ENCODE measurements at regions of chr13 and their contacts with region 1.

Region 1: DNA sequence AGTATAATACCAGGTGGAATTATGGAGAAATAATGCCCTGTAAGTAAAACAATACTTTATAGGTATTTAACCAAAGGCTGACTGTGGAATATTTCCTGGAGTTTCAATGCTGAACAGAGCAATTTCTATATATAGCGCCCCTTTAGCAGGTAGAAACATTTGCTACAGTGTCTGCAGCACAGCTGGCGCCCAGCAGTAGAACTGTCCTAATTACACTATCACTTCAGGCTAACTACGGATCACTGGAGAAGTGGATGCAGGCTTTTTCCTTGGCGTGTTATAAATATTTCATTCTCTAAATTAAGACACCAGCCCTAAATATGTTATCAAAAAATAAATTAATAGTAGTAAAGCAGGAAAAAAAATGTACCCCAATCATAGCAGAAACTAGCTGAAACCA is 3.1 kb downstream of the SHISA2 start:
- DNase-seq: no peak
- ATAC-seq: no peak
- H3K4me3 ChIP-seq: no peak overlapping the region
- H3K27ac ChIP-seq: no peak overlapping the region
- H3K4me1 ChIP-seq: peaks cover 0 to 31% (median 13%) of the 10 kb centered on the region in 9 donors
- H3K27me3 ChIP-seq: peaks cover 0 to 99% (median 86%) of the 10 kb centered on the region in 7 donors
- CTCF ChIP-seq: no peak

Region 2: DNA sequence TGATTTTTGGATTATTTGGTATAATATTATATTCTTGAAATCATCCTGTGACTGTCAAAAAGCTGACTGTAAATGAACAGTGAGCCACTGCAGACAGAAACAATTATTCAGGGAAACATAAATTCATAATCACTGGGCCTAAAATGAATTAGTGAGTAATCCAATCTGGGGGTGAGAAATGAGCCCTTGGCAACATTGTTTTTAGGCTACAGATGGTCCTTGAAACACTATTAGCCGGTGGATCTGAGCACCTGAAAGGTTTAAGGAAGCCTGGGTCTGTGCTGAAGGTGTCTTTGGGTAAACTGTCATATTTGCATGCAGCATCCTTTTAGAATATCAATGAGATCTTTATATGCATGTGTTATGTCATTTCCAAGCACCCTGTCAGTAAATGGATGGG is 386.2 kb before region 1 on chr13:
- intact Hi-C with region 1: loop called in 1 of 10 experiments (anchors 1 kb)
- DNase-seq: no peak
- ATAC-seq: no peak
- H3K4me3 ChIP-seq: no peak overlapping the region
- H3K27ac ChIP-seq: no peak overlapping the region
- H3K4me1 ChIP-seq: no peaks in the 10 kb centered on the region
- H3K27me3 ChIP-seq: peaks cover 0 to 9% (median 0%) of the 10 kb centered on the region in 7 donors
- CTCF ChIP-seq: no peak

Region 3: GRCh38 chr13:26406791-26407190 is 358.1 kb after region 1 on chr13:
- intact Hi-C with region 1: no loop called
- DNase-seq: no peak
- ATAC-seq: peak in 1 of 8 donors; percentile 38
- H3K4me3 ChIP-seq: no peak overlapping the region
- H3K27ac ChIP-seq: no peak overlapping the region
- H3K4me1 ChIP-seq: no peaks in the 10 kb centered on the region
- H3K27me3 ChIP-seq: no peaks in the 10 kb centered on the region
- CTCF ChIP-seq: no peak